Activated CD8-positive, alpha-beta T cell treated with anti-CD3 and anti-CD28 coated beads for 36 hours (primary cell): ENCODE measurements at regions of chr2 and their contacts with region 1.

Region 1: DNA sequence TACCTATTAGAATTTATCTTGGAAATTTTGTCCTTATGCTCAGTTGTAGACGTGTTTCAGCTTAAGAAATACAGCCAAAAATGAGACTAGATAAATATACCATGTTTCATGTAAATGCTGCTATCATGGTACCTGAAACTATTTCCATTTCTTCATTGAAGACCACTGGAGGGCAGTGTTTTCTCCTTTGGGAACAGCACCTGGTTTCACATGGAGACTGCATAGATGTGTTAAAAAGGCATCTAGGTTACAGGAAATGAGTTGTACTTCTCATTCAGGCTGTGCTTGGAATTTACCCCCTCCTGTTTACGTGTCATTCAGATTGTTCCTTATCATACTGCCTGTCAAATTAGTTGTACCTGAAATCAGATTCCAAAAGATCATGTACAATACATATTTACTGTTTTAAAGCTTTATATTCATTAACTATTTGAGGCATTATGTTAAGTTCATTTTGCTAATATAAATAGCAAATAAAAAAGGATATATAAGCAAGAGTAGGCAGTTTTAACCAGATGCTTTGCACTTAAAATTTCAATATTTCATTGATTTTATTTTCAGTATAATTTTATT is 57.3 kb upstream of the PSMD14 start:
- DNase-seq: no peak
- ATAC-seq: peak; percentile 51
- H3K4me3 Mint-ChIP-seq: no peak overlapping the region
- H3K27ac Mint-ChIP-seq: no peak overlapping the region
- H3K4me1 Mint-ChIP-seq: peaks cover 20% of the 10 kb centered on the region
- H3K27me3 Mint-ChIP-seq: peaks cover 4% of the 10 kb centered on the region
- CTCF ChIP-seq: peak; percentile 38

Region 2: DNA sequence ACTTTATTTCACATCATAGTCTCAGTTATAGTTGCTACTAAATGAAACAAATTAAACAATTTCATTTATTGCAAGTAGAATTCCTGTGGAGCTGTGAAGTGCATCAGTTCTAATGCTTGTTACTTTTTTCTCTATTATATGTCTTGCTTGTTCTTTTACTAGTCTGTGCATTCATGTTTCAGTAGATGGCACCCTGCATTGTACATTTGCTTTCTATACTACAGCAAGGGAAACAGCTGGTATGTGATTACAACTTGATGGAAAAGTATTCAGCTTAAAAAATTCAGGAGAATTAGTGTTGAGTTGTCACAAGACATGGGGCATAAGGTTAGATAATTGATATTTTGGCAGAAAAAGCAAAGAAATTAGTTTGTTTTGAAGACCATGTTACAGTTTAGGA is 18.4 kb before region 1 on chr2:
- CTCF ChIA-PET with region 1: interaction called, 10 read pairs
- POLR2A ChIA-PET with region 1: interaction called, 4 read pairs
- intact Hi-C with region 1: no loop called
- DNase-seq: no peak
- ATAC-seq: no peak
- H3K4me3 Mint-ChIP-seq: no peak overlapping the region
- H3K27ac Mint-ChIP-seq: no peak overlapping the region
- H3K4me1 Mint-ChIP-seq: peaks cover 19% of the 10 kb centered on the region
- H3K27me3 Mint-ChIP-seq: no peaks in the 10 kb centered on the region
- CTCF ChIP-seq: no peak